A673 (cell line): ENCODE measurements at regions of chr9 and their contacts with region 1.

Region 1: DNA sequence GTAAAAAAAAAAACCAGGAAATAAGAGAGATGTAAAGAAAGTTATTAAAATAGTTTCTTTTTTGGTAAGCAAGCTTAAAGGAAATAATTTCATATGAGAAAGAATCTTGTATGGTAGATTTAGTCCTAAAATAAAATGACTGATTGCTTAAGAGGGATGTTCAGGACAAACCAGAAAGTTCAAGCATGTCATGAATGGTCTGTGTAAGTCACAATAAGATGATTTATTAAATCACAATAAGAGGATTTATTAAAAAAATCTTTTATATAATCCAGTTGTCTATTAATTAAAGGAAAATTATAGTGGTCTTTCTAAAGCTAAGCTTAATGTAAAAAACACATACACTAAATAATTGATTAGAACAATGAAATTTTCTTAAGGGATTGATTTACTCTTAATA is 91.8 kb upstream of the OR13F1 start:
- DNase-seq: no peak
- H3K4me3 ChIP-seq: no peak overlapping the region
- H3K27ac ChIP-seq: no peak overlapping the region
- H3K4me1 ChIP-seq: no peaks in the 10 kb centered on the region
- H3K27me3 ChIP-seq: no peaks in the 10 kb centered on the region
- CTCF ChIP-seq: no peak

Region 2: DNA sequence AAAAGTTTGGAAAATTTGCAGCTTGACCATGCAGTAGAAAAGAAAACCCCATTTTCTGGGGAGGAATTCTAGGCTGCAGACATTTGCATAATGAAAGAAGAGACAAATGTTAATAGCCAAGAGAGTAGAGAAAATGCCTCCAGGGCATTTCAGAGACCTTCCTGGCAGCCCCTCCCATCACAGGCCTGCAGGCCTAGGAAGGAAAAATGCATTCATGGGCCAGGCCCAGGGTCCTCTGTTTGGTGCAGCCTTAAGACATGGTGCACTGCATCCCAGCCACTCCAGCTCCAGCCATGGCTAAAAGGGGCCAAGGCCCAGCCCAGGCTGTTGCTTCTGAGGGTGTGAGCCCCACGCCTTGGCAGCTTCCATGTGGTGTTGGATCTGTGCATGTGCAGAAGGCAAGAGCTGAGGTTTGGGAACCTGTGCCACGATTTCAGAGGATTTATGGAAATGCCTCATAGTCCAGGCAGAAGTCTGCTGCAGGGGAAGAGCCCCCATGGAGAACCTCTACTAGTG is 16.9 kb after region 1 on chr9:
- CTCF ChIA-PET with region 1: no interaction called
- POLR2A ChIA-PET with region 1: no interaction called
- intact Hi-C with region 1: loop called (anchors 1 kb)
- DNase-seq: no peak
- H3K4me3 ChIP-seq: no peak overlapping the region
- H3K27ac ChIP-seq: no peak overlapping the region
- H3K4me1 ChIP-seq: no peaks in the 10 kb centered on the region
- H3K27me3 ChIP-seq: no peaks in the 10 kb centered on the region
- CTCF ChIP-seq: no peak